HepG2 (cell line): ENCODE measurements at regions of chrX and their contacts with region 1.

Region 1: DNA sequence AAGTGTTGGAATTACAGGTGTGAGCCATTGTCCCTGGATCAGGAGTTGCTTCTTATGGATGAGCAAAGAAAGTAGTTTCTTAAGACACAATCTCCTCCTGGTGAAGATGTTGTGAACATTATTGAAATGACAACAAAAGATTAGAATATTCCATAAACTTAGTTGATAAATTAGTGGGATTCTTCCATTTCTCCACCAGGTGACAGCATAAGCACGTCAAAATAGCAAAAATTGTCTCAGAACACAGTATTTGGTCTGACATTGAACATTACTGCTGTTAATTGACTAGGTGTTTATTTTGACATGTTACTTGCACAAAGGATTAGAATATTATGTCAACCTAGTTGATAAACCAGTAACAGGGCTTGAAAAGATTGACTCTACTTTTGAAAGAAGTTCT is 21.6 kb downstream of the CLDN34 start:
- DNase-seq: no peak
- ATAC-seq: no peak
- H3K4me3 ChIP-seq: no peak overlapping the region
- H3K27ac ChIP-seq: no peak overlapping the region
- H3K4me1 ChIP-seq: no peaks in the 10 kb centered on the region
- H3K27me3 ChIP-seq: no peaks in the 10 kb centered on the region
- CTCF ChIP-seq: peak; percentile 48
- EP300 ChIP-seq: no peak
- POLR2A ChIP-seq: no peak
- RAD21 ChIP-seq: 0 out of 2 replicates have a peak, but pooled peaks have one; percentile 21

Region 2: GRCh38 chrX:9859711-9860555 is 128.8 kb before region 1 on chrX:
- CTCF ChIA-PET with region 1: no interaction called
- POLR2A ChIA-PET with region 1: no interaction called
- in situ Hi-C with region 1: no loop called
- intact Hi-C with region 1: no loop called
- DNase-seq: no peak
- ATAC-seq: no peak
- H3K4me3 ChIP-seq: no peak overlapping the region
- H3K27ac ChIP-seq: no peak overlapping the region
- H3K4me1 ChIP-seq: peaks cover 24% of the 10 kb centered on the region
- H3K27me3 ChIP-seq: no peaks in the 10 kb centered on the region
- CTCF ChIP-seq: no peak
- EP300 ChIP-seq: no peak
- POLR2A ChIP-seq: no peak
- RAD21 ChIP-seq: no peak

Region 3: GRCh38 chrX:9873952-9874351 is 114.8 kb before region 1 on chrX:
- CTCF ChIA-PET with region 1: no interaction called
- POLR2A ChIA-PET with region 1: no interaction called
- in situ Hi-C with region 1: no loop called
- intact Hi-C with region 1: loop called (anchors 10 kb)
- DNase-seq: peak; percentile 24
- ATAC-seq: peak; percentile 75
- H3K4me3 ChIP-seq: no peak overlapping the region
- H3K27ac ChIP-seq: no peak overlapping the region
- H3K4me1 ChIP-seq: no peaks in the 10 kb centered on the region
- H3K27me3 ChIP-seq: no peaks in the 10 kb centered on the region
- CTCF ChIP-seq: peak; percentile 63
- EP300 ChIP-seq: no peak
- POLR2A ChIP-seq: no peak
- RAD21 ChIP-seq: no peak

Region 4: GRCh38 chrX:10173316-10173900 is 184.6 kb after region 1 on chrX:
- CTCF ChIA-PET with region 1: no interaction called
- POLR2A ChIA-PET with region 1: no interaction called
- in situ Hi-C with region 1: no loop called
- intact Hi-C with region 1: no loop called
- DNase-seq: no peak
- ATAC-seq: no peak
- H3K4me3 ChIP-seq: no peak overlapping the region
- H3K27ac ChIP-seq: no peak overlapping the region
- H3K4me1 ChIP-seq: peaks cover 19% of the 10 kb centered on the region
- H3K27me3 ChIP-seq: no peaks in the 10 kb centered on the region
- CTCF ChIP-seq: no peak
- EP300 ChIP-seq: no peak
- POLR2A ChIP-seq: no peak
- RAD21 ChIP-seq: no peak

Region 5: DNA sequence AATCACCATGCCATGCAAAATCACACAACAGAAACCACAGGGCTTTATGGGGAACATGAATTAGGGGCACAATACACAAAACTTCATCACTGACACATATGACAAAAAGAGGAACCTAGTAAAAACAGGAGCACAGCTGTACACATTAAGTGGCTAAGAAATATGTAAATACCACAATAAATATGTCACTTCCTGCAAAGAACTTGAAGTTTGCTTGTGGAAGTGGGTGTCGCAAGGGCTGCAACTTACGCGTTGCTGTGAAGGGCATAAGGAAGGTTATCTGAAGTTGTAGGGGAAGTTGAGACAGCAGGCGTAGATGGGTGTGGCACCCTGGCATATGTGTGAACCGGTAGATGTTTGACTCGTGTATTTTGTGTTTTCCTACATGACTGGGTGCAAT is 210.4 kb after region 1 on chrX:
- CTCF ChIA-PET with region 1: no interaction called
- POLR2A ChIA-PET with region 1: no interaction called
- in situ Hi-C with region 1: no loop called
- intact Hi-C with region 1: no loop called
- DNase-seq: no peak
- ATAC-seq: no peak
- H3K4me3 ChIP-seq: no peak overlapping the region
- H3K27ac ChIP-seq: no peak overlapping the region
- H3K4me1 ChIP-seq: no peaks in the 10 kb centered on the region
- H3K27me3 ChIP-seq: no peaks in the 10 kb centered on the region
- CTCF ChIP-seq: no peak
- EP300 ChIP-seq: no peak
- POLR2A ChIP-seq: no peak
- RAD21 ChIP-seq: no peak